ENCODE measurements at regions of chr15 and their contacts with region 1.

Region 1: GRCh38 chr15:52013151-52013791 is 5.7 kb upstream of the MAPK6 start:
- DNase-seq: no peak
- H3K4me3 Mint-ChIP-seq: no peak overlapping the region
- H3K27ac Mint-ChIP-seq: peak overlapping the region; percentile 82
- H3K4me1 Mint-ChIP-seq: peaks cover 50% of the 10 kb centered on the region
- H3K27me3 Mint-ChIP-seq: no peaks in the 10 kb centered on the region

Region 2: DNA sequence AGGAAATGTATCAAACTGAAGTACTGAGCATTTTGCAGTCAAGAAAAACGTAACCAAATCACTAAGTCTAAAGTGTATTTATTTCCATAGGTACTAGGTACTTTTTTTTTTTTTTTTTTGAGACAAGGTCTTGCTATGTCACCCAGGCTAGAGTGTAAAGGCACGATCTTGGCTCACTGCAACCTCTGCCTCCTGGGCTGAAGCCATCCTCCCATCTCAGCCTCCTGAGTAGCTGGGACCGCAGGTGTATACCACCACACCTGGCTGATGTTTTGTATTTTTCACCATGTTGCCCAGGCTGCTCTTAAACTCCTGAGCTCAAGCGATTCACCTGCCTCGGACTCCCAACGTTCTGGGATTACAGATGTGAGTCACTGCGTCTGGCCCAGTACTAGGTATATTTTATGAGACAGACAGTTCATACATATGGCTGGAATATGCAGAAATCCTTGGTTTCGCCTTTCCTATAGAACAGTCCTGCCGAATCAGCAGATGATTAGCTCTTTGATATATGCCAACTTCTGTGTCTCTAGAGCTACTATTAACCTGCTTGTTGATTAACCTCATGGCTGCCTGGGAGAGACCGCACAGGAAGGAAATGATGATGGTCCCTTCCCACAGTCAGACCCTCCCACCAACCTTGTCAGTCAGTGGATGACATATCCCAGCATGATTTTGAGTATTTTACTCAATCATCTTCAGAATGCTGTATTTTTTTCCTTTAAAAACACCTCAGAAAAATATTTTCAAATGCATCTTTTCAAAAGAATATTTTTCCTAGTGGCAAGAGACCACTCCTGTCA is 151.5 kb before region 1 on chr15:
- CTCF ChIA-PET with region 1: no interaction called
- POLR2A ChIA-PET with region 1: no interaction called
- intact Hi-C with region 1: loop called (anchors 2 kb)
- DNase-seq: peak; percentile 79
- H3K4me3 Mint-ChIP-seq: peak overlapping the region; percentile 36
- H3K27ac Mint-ChIP-seq: peak overlapping the region; percentile 61
- H3K4me1 Mint-ChIP-seq: peaks cover 66% of the 10 kb centered on the region
- H3K27me3 Mint-ChIP-seq: no peaks in the 10 kb centered on the region

Region 3: DNA sequence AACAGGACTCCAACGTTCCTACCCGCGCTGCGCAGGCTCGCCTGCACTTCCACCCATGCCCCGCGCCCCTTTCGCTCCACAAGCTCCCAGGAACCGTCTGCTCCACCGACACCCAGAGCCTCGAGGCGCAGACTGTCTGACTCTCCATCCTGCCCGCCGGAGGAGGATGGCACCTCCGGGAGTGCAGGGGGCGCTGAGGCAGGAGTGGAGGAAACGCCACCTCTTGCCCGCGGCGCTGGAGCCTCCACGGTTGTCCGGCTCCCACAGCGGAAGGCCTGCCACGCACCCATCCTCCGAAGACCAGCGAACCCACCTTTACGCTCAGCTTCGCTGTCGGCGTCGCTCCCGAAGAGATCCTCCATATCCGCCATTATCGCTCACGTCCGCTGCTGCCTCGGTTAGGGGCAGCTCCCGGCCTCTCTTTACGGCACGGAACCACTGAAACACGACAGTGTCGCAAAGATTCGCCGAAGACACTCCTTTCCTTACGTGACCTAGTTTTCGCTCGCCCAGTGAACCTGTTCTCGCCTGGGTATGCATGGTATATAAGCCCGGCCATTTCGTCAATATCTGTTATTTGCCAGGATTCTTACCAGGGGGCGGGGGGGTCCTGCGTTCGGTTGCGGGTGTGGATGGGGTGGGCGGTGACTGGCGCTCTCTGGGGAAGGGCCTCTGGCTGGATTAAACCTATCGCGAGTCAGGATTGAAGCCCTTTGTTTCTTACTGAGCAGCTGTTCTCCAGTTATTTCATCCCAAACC is 41.7 kb before region 1 on chr15 and contains the start of gene LEO1:
- CTCF ChIA-PET with region 1: no interaction called
- POLR2A ChIA-PET with region 1: no interaction called
- intact Hi-C with region 1: loop called (anchors 2 kb)
- DNase-seq: peak; percentile 93
- H3K4me3 Mint-ChIP-seq: peak within 1 kb of the TSS; percentile 96
- H3K27ac Mint-ChIP-seq: peak within 1 kb of the TSS; percentile 94
- H3K4me1 Mint-ChIP-seq: peaks cover 17% of the 10 kb centered on the region
- H3K27me3 Mint-ChIP-seq: peaks cover 2% of the 10 kb centered on the region
- total RNA-seq, gene LEO1: 27.3 to 28.3 TPM

Region 4: DNA sequence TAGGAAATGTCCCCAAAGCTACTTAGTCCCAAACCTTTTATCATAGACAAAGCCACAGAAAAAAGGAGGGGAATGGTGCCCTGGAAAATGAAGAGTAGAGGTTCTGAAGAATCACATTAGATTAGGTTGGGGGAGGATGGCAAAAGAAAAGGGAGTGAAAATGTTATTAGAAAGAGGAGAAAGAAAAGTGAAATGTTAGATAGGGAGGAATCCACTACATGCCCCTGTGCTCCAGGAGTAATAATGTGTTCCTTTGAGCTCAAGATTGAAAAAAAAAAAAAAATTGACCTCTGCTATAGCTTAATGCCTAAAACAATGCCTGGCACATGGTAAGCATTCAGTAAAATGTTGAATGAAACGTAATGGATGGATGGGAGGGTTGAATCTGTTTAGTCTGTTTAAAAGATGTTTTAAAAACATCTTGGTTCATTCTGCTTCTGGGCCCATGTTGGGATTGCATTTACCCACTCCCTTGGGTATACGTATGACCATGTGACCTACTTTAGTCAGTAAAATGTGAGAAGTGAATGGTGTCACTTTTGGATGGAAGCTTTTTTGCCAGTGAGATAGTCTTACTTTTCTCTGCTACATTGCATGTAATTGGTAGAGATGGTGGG is 24.7 kb after region 1 on chr15:
- CTCF ChIA-PET with region 1: no interaction called
- POLR2A ChIA-PET with region 1: no interaction called
- intact Hi-C with region 1: no loop called
- DNase-seq: no peak
- H3K4me3 Mint-ChIP-seq: no peak overlapping the region
- H3K27ac Mint-ChIP-seq: no peak overlapping the region
- H3K4me1 Mint-ChIP-seq: peaks cover 47% of the 10 kb centered on the region
- H3K27me3 Mint-ChIP-seq: no peaks in the 10 kb centered on the region

Region 5: DNA sequence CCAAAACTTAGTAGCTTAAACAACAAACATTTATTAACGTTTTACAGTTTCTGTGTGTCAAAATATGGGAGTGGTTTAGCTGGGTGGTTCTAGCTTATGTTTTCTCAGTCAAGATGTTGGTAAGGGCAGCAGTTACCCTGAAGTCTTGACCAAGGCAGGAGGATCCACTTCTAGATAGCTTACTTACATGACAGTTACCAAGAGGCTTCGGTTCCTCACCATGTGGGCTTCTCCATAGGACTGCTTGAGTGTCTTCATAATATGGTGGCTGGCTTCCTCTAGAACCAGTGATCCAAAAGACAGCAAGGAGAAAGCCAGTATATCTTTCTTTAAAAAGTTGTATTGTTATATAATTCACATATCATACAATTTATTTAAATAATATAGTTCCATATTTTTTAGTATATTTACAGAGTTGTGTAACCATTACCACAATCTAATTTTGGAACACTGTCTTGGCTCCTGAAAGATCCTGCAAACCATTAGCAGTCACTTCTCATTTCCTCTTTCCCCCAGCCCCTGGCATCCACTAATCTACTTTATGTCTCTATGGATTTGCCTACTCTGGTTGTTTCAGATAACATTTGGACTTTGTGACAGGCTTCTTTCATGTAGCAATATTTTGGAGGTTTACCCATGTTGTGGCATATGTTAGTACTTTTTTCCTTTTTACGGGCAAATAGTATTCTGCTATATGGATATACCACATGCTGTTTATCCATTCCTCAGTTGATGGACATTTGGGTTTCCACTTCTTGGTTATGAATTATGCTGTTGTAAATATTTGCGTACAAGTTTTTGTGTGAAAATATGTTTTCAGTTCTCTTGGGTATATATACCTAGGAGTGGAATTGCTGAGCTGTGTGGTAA is 39.0 kb after region 1 on chr15:
- CTCF ChIA-PET with region 1: no interaction called
- POLR2A ChIA-PET with region 1: no interaction called
- intact Hi-C with region 1: no loop called
- DNase-seq: no peak
- H3K4me3 Mint-ChIP-seq: no peak overlapping the region
- H3K27ac Mint-ChIP-seq: no peak overlapping the region
- H3K4me1 Mint-ChIP-seq: no peaks in the 10 kb centered on the region
- H3K27me3 Mint-ChIP-seq: no peaks in the 10 kb centered on the region

Region 6: DNA sequence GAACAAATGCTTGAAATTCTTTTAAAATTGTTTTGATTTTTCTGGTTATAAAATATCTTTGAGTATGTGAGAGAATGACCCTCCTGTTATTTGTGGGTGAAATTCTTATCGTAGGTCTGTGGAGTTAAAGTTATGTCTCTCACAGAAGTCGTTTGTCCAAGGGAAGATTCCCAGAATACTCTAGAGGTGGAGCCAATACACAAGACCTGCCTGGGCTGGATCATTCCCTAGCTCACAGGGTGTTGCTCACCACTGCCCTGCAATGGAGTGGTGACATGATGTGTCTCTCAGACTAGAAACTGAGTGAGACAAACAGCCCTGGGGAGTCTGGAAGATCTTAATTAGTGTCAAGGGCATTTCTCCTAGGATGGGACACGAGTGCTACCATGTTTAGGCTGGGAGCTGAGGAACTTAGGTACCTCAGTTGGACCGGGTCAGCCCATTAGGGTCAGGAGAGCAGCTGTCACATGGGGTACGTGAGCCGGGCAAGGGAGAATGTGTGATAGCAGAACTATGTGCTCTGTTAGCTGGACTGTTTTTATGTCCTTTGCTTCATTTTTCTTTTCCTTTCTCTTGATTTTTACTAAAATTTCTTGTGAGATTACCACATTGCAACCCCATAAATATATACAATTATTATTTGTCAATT is 335.9 kb after region 1 on chr15:
- CTCF ChIA-PET with region 1: no interaction called
- POLR2A ChIA-PET with region 1: no interaction called
- intact Hi-C with region 1: no loop called
- DNase-seq: no peak
- H3K4me3 Mint-ChIP-seq: no peak overlapping the region
- H3K27ac Mint-ChIP-seq: no peak overlapping the region
- H3K4me1 Mint-ChIP-seq: peaks cover 5% of the 10 kb centered on the region
- H3K27me3 Mint-ChIP-seq: no peaks in the 10 kb centered on the region